HepG2 (cell line): ENCODE measurements at regions of chr20 and their contacts with region 1.

Region 1: GRCh38 chr20:38165089-38165989 is at the start of gene TGM2:
- DNase-seq: peak; percentile 87
- ATAC-seq: peak; percentile 90
- H3K4me3 ChIP-seq: peak within 1 kb of the TSS; percentile 57 to 82 (median 65)
- H3K27ac ChIP-seq: no peak within 1 kb of the TSS
- H3K4me1 ChIP-seq: peaks cover 87% of the 10 kb centered on the region
- H3K27me3 ChIP-seq: no peaks in the 10 kb centered on the region
- CTCF ChIP-seq: peak; percentile 95
- EP300 ChIP-seq: peak in 1 of 2 experiments; percentile 57; a peak in 2 of 4 replicates
- POLR2A ChIP-seq: peak in 1 of 2 experiments; percentile 74; a peak in 1 of 4 replicates
- RAD21 ChIP-seq: peak; percentile 100
- total RNA-seq, gene TGM2: 4.2 and 4.5 TPM in 2 replicates

Region 2: DNA sequence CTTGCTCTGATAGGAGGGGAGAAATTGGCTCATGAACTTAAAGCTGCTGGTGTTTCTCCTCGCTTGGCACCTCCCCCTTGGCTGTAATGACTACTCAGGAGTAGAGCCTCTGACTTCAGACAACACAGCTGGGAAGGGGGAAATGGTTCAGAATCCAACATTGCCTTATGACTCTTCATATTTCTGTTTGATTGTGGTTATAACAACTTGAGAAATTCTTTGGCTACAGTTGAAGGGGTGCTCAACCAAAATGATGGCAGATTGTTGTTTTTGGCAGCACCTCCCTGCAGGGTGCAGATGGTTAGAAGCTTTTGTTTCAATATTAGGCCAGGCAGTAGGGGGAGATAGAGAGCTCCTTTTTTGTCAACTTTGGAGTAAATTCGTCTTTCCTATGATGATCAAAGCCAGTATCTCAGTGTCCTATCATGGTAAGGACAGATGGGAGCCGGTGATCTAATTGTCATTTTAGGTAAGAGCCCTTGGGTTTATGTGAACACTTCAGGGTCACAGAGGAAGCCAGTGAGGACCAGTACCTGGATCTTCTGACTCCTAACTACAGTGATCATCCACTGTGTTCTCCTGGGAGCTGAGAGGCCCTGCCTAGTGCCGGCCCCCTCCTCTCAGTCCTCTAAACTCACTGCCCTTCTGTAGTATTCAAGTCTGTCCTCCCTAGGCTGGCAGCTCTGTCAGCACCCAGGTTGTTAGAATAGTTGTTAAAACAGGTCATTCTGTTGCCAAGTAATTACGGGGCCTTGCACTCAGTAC is 91.8 kb before region 1 on chr20:
- CTCF ChIA-PET with region 1: interaction called, 54 read pairs
- POLR2A ChIA-PET with region 1: interaction called, 15 read pairs
- in situ Hi-C with region 1: no loop called
- intact Hi-C with region 1: loop called (anchors 1 kb)
- DNase-seq: peak; percentile 76
- ATAC-seq: peak; percentile 82
- H3K4me3 ChIP-seq: no peak overlapping the region
- H3K27ac ChIP-seq: no peak overlapping the region
- H3K4me1 ChIP-seq: peaks cover 37% of the 10 kb centered on the region
- H3K27me3 ChIP-seq: no peaks in the 10 kb centered on the region
- CTCF ChIP-seq: peak; percentile 84
- EP300 ChIP-seq: no peak
- POLR2A ChIP-seq: no peak
- RAD21 ChIP-seq: peak; percentile 79

Region 3: GRCh38 chr20:38113401-38114325 is 51.7 kb before region 1 on chr20:
- CTCF ChIA-PET with region 1: interaction called, 17 read pairs
- POLR2A ChIA-PET with region 1: interaction called, 6 read pairs
- in situ Hi-C with region 1: no loop called
- intact Hi-C with region 1: loop called (anchors 1 kb)
- DNase-seq: peak; percentile 78
- ATAC-seq: peak; percentile 73
- H3K4me3 ChIP-seq: no peak overlapping the region
- H3K27ac ChIP-seq: no peak overlapping the region
- H3K4me1 ChIP-seq: peaks cover 51% of the 10 kb centered on the region
- H3K27me3 ChIP-seq: no peaks in the 10 kb centered on the region
- CTCF ChIP-seq: peak; percentile 81
- EP300 ChIP-seq: no peak
- POLR2A ChIP-seq: no peak
- RAD21 ChIP-seq: peak; percentile 78

Region 4: GRCh38 chr20:38127011-38127621 is 38.2 kb before region 1 on chr20:
- CTCF ChIA-PET with region 1: interaction called, 20 read pairs
- POLR2A ChIA-PET with region 1: interaction called, 6 read pairs
- in situ Hi-C with region 1: no loop called
- intact Hi-C with region 1: loop called (anchors 1 kb)
- DNase-seq: no peak
- ATAC-seq: no peak
- H3K4me3 ChIP-seq: no peak overlapping the region
- H3K27ac ChIP-seq: no peak overlapping the region
- H3K4me1 ChIP-seq: peaks cover 64% of the 10 kb centered on the region
- H3K27me3 ChIP-seq: no peaks in the 10 kb centered on the region
- CTCF ChIP-seq: no peak
- EP300 ChIP-seq: no peak
- POLR2A ChIP-seq: no peak
- RAD21 ChIP-seq: no peak